ENCODE measurements at regions of chr17 and their contacts with region 1.

Region 1: DNA sequence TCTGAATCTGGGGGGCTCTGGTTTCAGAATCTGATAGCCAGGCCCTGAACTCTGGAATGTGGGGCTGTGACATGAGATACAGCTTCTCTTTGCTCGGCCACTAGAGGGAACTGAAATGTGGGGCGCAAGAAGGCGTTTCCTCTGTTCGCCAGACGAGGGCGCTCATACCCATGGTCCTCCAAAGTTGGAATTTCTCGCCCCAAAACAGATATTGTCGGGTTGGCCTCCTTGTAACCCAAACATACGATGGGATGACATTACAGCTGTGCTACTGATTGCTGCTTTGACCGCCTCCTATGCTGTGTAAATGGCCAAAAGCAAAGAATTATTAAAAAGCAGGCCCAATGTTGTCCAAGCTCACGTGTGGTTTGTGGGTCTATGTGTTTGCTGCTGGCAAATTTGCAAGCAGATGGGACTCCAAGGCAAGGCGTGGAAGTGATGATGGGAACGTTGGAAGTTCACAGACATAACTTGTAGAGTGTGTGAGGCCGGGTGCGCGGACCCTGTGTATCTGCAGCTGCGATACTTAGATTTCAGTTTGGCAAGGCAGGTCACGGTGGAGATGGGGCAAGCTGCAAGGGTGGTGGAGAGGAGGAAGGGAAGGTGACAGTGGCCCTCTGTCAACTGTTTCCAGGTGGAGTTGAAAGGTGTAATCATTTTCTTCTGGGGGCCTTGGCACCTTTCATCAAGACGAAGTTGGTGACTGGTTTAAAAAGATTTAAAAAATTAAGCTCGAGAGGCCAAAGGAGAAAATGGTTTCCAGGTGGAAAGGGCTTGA is 13.0 kb upstream of the MSI2 start:
- DNase-seq: peak; percentile 83
- ATAC-seq: peak; percentile 73
- H3K4me3 ChIP-seq: no peak overlapping the region
- H3K27ac ChIP-seq: no peak overlapping the region
- H3K4me1 ChIP-seq: no peaks in the 10 kb centered on the region
- H3K27me3 ChIP-seq: no peaks in the 10 kb centered on the region
- CTCF ChIP-seq: peak; percentile 100

Region 2: GRCh38 chr17:57284984-57285646 is 41.8 kb after region 1 on chr17:
- CTCF ChIA-PET with region 1: no interaction called
- POLR2A ChIA-PET with region 1: no interaction called
- intact Hi-C with region 1: no loop called
- DNase-seq: no peak
- ATAC-seq: no peak
- H3K4me3 ChIP-seq: no peak overlapping the region
- H3K27ac ChIP-seq: no peak overlapping the region
- H3K4me1 ChIP-seq: no peaks in the 10 kb centered on the region
- H3K27me3 ChIP-seq: no peaks in the 10 kb centered on the region
- CTCF ChIP-seq: no peak

Region 3: DNA sequence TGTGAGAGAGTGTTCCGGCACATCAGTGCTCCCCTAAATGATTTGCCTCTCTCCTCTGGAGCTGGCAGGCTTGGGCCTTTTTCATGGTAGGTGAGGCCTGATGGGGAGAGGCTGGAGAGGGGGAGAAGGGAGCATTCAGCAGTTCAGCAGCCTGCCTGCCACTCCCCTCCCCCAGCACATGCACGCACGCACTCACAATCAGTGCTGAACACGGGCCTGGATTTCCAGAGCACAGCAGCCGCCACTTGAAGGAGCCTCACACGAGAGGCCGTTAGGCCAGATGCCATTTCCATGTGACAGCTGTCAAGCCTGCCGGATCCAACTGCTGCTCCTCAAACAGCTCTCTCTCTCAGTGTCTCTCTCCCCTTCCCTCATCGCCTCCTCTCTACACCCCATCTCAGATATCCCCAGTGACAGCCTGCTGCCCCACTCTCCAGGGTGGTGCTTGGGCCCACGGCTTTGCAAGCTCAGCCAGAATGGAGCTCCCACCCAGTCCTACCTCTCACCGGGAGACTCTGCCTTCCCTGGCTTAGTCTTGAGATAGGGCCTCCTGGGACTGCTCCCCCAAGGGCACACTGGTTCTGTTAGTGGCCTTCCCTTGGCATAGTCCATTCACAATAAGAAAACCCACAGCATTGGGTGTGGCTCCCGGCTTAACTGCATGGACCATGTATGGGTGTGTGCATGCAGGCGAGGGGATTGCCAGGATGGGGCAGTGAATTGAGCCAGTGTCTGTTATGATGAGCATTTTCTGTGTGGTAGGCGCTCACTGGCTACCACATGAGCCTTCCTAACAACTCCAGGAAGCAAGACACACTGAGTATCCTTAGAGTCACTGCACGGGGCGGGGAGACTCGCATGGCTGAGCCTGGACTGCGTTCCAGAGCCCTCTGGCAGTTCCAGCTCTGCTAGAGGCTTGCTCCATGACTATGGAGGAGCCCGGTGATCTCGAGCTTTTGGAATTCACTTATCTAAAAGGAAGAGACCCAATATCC is 275.5 kb after region 1 on chr17:
- CTCF ChIA-PET with region 1: interaction called, 20 read pairs
- POLR2A ChIA-PET with region 1: no interaction called
- intact Hi-C with region 1: loop called (anchors 1 kb)
- DNase-seq: peak; percentile 74
- ATAC-seq: peak; percentile 45
- H3K4me3 ChIP-seq: no peak overlapping the region
- H3K27ac ChIP-seq: peak overlapping the region; percentile 31
- H3K4me1 ChIP-seq: peaks cover 32% of the 10 kb centered on the region
- H3K27me3 ChIP-seq: no peaks in the 10 kb centered on the region
- CTCF ChIP-seq: no peak

Region 4: GRCh38 chr17:57597531-57598453 is 354.4 kb after region 1 on chr17:
- CTCF ChIA-PET with region 1: interaction called, 8 read pairs
- POLR2A ChIA-PET with region 1: no interaction called
- intact Hi-C with region 1: loop called (anchors 2 kb)
- DNase-seq: peak; percentile 85
- ATAC-seq: peak; percentile 90
- H3K4me3 ChIP-seq: no peak overlapping the region
- H3K27ac ChIP-seq: peak overlapping the region; percentile 38; the same call in 1 of the 2 replicates
- H3K4me1 ChIP-seq: peaks cover 6% of the 10 kb centered on the region
- H3K27me3 ChIP-seq: no peaks in the 10 kb centered on the region
- CTCF ChIP-seq: peak; percentile 98

Region 5: GRCh38 chr17:57747221-57748017 is 504.1 kb after region 1 on chr17:
- CTCF ChIA-PET with region 1: interaction called, 16 read pairs
- POLR2A ChIA-PET with region 1: no interaction called
- intact Hi-C with region 1: loop called (anchors 1 kb)
- DNase-seq: peak; percentile 83
- ATAC-seq: peak; percentile 95
- H3K4me3 ChIP-seq: no peak overlapping the region
- H3K27ac ChIP-seq: no peak overlapping the region
- H3K4me1 ChIP-seq: no peaks in the 10 kb centered on the region
- H3K27me3 ChIP-seq: peaks cover 40% of the 10 kb centered on the region
- CTCF ChIP-seq: peak; percentile 96

Measured in PC-3 (cell line).